HepG2 (cell line): ENCODE measurements at regions of chr20 and their contacts with region 1.

Region 1: DNA sequence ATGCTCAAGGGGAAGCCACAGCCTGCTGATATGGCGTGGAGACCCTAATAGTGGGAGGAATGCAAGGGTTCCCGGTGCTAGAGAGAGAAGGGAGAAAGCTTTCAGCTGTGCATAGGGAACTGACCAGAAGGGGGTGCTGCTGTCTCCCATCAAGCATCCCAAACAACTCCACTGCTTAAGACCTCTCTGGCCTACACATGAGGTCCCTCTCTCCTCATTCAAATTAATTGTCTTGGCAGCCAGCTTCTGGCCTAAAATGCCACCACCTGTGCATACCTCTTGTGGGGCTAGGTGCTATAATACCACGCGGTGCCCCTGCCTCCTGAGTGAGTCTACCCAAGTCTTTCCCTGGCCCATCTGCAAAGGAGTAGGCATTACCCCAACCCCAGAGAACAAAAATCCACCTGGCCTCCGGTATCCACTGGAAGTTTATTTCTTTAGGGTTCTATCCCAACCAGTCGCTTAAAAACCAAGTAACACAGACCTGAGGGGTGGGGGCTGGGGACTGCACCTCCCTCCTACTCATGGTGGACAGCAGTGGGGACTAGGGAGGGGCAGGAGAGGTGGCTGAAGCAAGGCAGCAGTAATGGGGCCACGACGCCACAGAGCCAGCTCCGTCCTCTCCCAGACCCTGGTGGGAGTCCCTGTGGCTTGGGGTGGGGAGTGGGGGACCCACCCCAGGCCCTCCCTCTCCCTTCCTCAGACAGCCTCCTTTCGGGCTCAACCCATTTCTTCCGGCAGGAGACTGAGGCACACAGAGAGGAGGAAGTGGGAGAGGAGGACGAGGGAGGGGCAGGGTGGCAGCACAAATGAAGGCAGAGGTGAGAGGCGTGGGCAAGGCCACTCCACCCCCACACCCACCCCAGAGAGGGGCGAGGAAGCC is 14.2 kb downstream of the ADISSP start:
- DNase-seq: peak; percentile 71
- ATAC-seq: peak; percentile 54
- H3K4me3 ChIP-seq: no peak overlapping the region
- H3K27ac ChIP-seq: no peak overlapping the region
- H3K4me1 ChIP-seq: peaks cover 19% of the 10 kb centered on the region
- H3K27me3 ChIP-seq: peaks cover 2 to 9% of the 10 kb centered on the region in 2 experiments; a peak in 4 of 5 replicates
- CTCF ChIP-seq: peak; percentile 91
- EP300 ChIP-seq: no peak
- POLR2A ChIP-seq: no peak
- RAD21 ChIP-seq: peak; percentile 84

Region 2: DNA sequence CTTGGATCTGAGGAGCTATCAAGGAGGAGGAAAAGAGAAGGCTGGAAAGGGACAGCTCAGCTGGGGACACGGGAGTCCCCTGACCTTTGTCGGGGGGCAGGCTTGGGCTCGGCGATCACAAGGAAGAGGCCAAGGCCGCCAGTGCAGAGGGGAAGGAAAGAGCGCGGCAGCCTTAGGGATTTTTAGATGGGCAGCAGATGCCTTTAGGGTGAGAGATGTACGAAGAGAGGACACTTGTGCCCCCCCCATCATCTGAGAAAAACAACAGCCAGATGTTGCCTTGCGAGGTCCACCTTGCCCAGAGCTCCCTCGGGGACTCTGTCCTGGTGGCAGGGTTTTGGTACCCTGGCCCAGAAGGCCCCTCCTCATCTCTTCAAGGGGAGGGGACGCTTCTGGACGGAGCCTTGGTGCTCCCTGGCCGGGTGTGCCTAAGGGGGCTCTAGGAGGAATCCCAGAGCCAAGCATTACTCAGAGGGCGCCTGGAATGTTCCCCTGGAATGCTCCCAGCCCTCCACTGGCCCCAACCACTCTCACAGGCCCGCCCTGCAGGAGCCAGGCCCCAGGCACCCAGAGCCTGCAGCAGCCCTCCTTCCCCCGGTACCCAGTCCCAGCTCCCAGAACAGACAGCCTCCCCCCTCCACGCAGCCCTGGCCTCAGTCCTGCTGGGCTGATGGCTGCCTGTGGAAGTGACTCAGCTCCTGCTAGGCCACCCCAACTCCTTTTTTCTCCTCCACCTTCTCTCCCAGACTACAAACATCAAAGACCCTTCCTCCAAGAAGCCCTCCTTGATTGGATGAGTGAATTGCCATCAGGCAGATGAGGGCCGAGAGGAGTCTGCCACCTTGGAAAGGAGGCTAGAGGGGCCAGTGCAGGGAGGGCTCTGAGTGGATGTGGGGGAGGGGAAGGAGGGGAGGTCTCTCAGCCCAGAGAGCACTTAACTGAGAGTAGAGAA is 73.3 kb before region 1 on chr20:
- CTCF ChIA-PET with region 1: interaction called, 12 read pairs
- POLR2A ChIA-PET with region 1: no interaction called
- in situ Hi-C with region 1: no loop called
- intact Hi-C with region 1: loop called (anchors 1 kb)
- DNase-seq: no peak
- ATAC-seq: peak; percentile 2; the same call in 2 of the 3 replicates
- H3K4me3 ChIP-seq: no peak overlapping the region
- H3K27ac ChIP-seq: no peak overlapping the region
- H3K4me1 ChIP-seq: 0 out of 2 replicates have a peak, but pooled peaks cover 9% of the 10 kb centered on the region
- H3K27me3 ChIP-seq: peaks cover 43 to 81% of the 10 kb centered on the region in 2 experiments
- CTCF ChIP-seq: no peak
- EP300 ChIP-seq: no peak
- POLR2A ChIP-seq: no peak
- RAD21 ChIP-seq: no peak

Region 3: GRCh38 chr20:3716195-3716834 is 37.0 kb before region 1 on chr20:
- CTCF ChIA-PET with region 1: interaction called, 45 read pairs
- POLR2A ChIA-PET with region 1: no interaction called
- in situ Hi-C with region 1: no loop called
- intact Hi-C with region 1: loop called (anchors 1 kb)
- DNase-seq: peak; percentile 65
- ATAC-seq: peak; percentile 94
- H3K4me3 ChIP-seq: no peak overlapping the region
- H3K27ac ChIP-seq: no peak overlapping the region
- H3K4me1 ChIP-seq: no peaks in the 10 kb centered on the region
- H3K27me3 ChIP-seq: peaks cover 0 to 26% of the 10 kb centered on the region in 2 experiments; a peak in 4 of 5 replicates
- CTCF ChIP-seq: peak; percentile 96
- EP300 ChIP-seq: no peak
- POLR2A ChIP-seq: no peak
- RAD21 ChIP-seq: peak; percentile 86

Region 4: GRCh38 chr20:3739054-3739925 is 14.0 kb before region 1 on chr20:
- CTCF ChIA-PET with region 1: no interaction called
- POLR2A ChIA-PET with region 1: interaction called, 13 read pairs
- in situ Hi-C with region 1: no loop called
- intact Hi-C with region 1: no loop called
- DNase-seq: no peak
- ATAC-seq: peak; percentile 66
- H3K4me3 ChIP-seq: peak overlapping the region in 1 of 3 experiments; percentile 39; a peak in 1 of 6 replicates
- H3K27ac ChIP-seq: no peak overlapping the region
- H3K4me1 ChIP-seq: peaks cover 43% of the 10 kb centered on the region
- H3K27me3 ChIP-seq: peaks cover 6 to 17% of the 10 kb centered on the region in 2 experiments
- CTCF ChIP-seq: no peak
- EP300 ChIP-seq: no peak
- POLR2A ChIP-seq: no peak
- RAD21 ChIP-seq: no peak

Region 5: DNA sequence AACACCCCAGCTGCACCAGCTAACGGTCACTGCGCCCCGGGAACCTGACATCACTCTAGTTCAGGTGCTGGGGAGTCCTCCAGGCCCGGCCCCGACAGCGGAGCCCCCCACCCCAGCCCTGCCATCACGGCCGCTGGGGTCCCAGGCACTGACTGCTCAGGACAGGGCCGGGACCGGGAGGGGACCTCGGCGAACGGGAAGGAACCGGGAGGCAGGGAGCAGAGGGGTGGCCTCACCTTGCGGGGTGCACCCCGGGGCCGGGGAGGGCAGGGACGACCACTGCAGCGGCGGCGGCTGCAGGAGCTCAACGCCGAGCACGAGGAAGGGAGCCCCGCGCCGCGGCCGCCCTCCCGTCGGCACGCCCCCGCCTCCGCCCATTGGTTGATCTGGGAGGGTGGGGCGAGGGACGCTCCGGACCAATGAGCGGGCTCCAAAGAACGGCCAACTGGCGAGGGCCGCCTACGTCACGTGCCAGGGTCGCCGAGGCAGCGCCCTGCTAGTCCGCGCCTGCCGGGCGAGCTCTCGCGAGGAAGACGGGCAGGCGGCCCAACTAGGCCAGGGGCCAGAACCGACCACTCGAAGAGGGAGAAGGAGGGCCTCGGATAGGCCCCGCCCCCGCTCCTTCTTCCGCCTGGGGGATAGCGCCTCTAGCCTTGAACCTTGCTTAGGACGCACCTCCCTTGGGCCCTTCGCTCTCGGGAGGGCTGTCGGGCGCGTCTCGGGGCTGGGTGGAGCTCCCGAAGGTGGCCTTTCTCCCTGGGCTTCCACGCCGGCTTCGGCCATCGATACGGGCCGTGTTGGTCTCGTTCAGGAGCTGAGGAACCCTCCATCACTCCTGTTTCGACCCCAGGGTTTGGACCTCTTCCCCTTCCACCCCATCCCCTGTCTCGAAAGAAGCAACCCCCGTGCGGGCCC is 14.3 kb after region 1 on chr20 and contains the start of gene ADISSP:
- CTCF ChIA-PET with region 1: interaction called, 10 read pairs
- POLR2A ChIA-PET with region 1: interaction called, 21 read pairs
- in situ Hi-C with region 1: no loop called
- intact Hi-C with region 1: loop called (anchors 1 kb)
- DNase-seq: peak; percentile 99
- ATAC-seq: peak; percentile 92
- H3K4me3 ChIP-seq: peak within 1 kb of the TSS; percentile 72 to 93 (median 89)
- H3K27ac ChIP-seq: peak within 1 kb of the TSS; percentile 75
- H3K4me1 ChIP-seq: peaks cover 74% of the 10 kb centered on the region
- H3K27me3 ChIP-seq: no peaks in the 10 kb centered on the region
- CTCF ChIP-seq: peak; percentile 74
- EP300 ChIP-seq: 0 out of 4 replicates have a peak, but pooled peaks of 1 of the 2 experiments have one; percentile 10
- POLR2A ChIP-seq: peak; percentile 82 to 97
- RAD21 ChIP-seq: peak; percentile 23
- total RNA-seq, gene ADISSP: 70.0 and 90.6 TPM in 2 replicates

Region 6: GRCh38 chr20:3781153-3781910 is 28.0 kb after region 1 on chr20 and contains the start of gene SPEF1:
- CTCF ChIA-PET with region 1: interaction called, 9 read pairs
- POLR2A ChIA-PET with region 1: no interaction called
- in situ Hi-C with region 1: no loop called
- intact Hi-C with region 1: loop called (anchors 1 kb)
- DNase-seq: peak; percentile 98
- ATAC-seq: peak; percentile 80
- H3K4me3 ChIP-seq: peak within 1 kb of the TSS; percentile 51 to 75 (median 59); a peak in 5 of 6 replicates
- H3K27ac ChIP-seq: no peak within 1 kb of the TSS
- H3K4me1 ChIP-seq: peaks cover 76% of the 10 kb centered on the region
- H3K27me3 ChIP-seq: peaks cover 2 to 31% of the 10 kb centered on the region in 2 experiments
- CTCF ChIP-seq: peak; percentile 79
- EP300 ChIP-seq: no peak
- POLR2A ChIP-seq: no peak
- RAD21 ChIP-seq: peak; percentile 63
- total RNA-seq, gene SPEF1: 0.27 and 0.32 TPM in 2 replicates

Region 7: DNA sequence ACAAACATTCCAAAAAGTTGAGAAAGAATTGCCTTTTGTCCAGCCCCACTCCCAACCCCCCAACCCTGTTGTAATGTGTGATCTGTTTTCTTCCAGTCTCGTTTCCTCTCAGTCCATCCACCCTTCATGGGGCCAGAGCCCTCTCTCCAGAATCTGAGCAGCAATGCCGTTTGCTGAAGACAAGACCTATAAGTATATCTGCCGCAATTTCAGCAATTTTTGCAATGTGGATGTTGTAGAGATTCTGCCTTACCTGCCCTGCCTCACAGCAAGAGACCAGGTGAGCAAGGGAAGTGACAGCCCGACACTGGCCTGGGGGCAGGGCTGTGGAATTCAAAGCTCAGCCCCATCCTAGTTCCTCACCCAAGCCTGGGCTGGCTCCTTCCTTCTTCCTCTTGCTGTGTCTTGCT is 101.1 kb after region 1 on chr20:
- CTCF ChIA-PET with region 1: interaction called, 7 read pairs
- POLR2A ChIA-PET with region 1: no interaction called
- in situ Hi-C with region 1: no loop called
- intact Hi-C with region 1: loop called (anchors 1 kb)
- DNase-seq: peak; percentile 70
- ATAC-seq: peak; percentile 65
- H3K4me3 ChIP-seq: no peak overlapping the region
- H3K27ac ChIP-seq: peak overlapping the region; percentile 22
- H3K4me1 ChIP-seq: peaks cover 24% of the 10 kb centered on the region
- H3K27me3 ChIP-seq: no peaks in the 10 kb centered on the region
- CTCF ChIP-seq: no peak
- EP300 ChIP-seq: peak in 1 of 2 experiments; percentile 31; a peak in 1 of 4 replicates
- POLR2A ChIP-seq: no peak
- RAD21 ChIP-seq: no peak

Region 8: GRCh38 chr20:3911956-3912355 is 158.6 kb after region 1 on chr20:
- CTCF ChIA-PET with region 1: no interaction called
- POLR2A ChIA-PET with region 1: no interaction called
- in situ Hi-C with region 1: no loop called
- intact Hi-C with region 1: no loop called
- DNase-seq: no peak
- ATAC-seq: peak; percentile 27; the same call in 2 of the 3 replicates
- H3K4me3 ChIP-seq: no peak overlapping the region
- H3K27ac ChIP-seq: no peak overlapping the region
- H3K4me1 ChIP-seq: no peaks in the 10 kb centered on the region
- H3K27me3 ChIP-seq: no peaks in the 10 kb centered on the region
- CTCF ChIP-seq: no peak
- EP300 ChIP-seq: no peak
- POLR2A ChIP-seq: 0 out of 4 replicates have a peak, but pooled peaks of 1 of the 2 experiments have one; percentile 21
- RAD21 ChIP-seq: no peak